ENCODE measurements at regions of chr7 and their contacts with region 1.

Region 1: DNA sequence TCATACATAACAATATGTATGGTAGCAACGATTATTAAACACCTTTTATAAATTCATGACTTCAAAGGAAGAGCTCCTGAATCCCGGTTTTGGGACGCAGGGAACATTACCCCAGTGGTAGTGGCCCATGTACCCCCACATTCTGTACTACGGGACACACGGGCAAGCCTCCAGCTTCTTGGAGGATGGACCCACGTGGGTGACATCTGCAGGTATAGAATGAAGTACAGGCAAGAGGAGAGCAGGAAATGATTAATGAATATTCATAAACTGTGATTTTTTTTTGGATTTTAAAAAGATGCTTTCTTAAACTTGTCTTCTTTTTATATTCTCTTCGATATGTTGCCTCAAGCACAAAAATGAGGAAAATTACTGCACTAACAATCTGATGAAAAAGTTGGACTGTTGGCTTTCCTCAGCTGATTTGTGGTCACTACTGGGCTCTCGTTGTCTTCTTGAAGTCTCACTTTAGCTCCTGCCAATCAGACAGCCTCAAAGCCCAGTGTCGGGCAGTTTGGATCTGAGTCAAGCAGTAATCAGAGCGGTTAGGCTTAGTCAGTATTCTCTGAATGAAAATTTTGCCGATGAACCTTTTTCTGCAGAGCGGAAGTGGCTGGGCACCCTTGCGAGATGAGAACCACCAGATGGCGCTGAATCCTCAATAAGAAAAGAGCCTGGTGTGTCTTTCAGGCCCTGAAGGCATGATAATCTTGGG is 157.7 kb upstream of the CDCA7L start:
- DNase-seq: peak; percentile 90

Region 2: GRCh38 chr7:21850531-21851285 is 252.7 kb before region 1 on chr7:
- in situ Hi-C with region 1: no loop called
- DNase-seq: no peak

Region 3: GRCh38 chr7:22452142-22452959 is 348.9 kb after region 1 on chr7:
- in situ Hi-C with region 1: loop called (anchors 25 kb)
- DNase-seq: peak; percentile 67

Measured in ACHN (cell line).